CD4-positive, alpha-beta T cell (primary cell): ENCODE measurements at regions of chr17 and their contacts with region 1.

Region 1: DNA sequence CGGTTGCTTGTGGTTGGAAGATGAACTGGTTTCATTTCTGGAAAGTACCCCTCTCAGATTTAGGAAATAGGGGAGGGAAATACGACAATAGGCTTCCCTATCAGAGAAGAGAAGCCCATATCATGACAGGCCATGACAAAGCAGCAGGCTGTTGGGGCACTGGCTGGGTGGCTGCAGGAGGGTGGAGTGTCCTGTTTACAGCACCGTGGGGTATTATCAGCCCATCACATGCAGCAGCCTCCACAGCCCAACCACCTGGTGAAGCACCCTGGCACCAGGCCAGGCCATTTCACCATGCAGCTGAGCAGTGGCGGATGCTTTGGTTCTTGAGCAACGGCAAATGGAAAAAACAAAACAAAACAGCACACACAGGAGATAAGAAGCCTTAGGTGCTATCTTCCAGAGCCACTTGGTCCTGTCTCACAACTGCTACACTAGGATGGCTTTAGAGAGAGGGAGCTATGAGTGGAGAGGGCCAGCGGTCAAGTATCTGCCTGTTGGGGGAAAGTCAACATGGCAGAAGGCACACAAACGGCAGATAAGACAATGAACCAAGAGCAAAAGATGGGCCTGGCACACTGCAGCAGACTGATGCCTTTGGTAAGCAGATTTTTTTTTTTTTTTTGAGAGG is 24.2 kb downstream of the FAM117A start:
- DNase-seq: peak; percentile 91 to 99 (median 98)
- ATAC-seq: peak; percentile 95
- H3K4me3 ChIP-seq: peak overlapping the region; percentile 54
- H3K4me3 Mint-ChIP-seq: peak overlapping the region; percentile 94
- H3K27ac ChIP-seq: peak overlapping the region; percentile 88 to 94
- H3K27ac Mint-ChIP-seq: peak overlapping the region; percentile 99
- H3K4me1 ChIP-seq: peaks cover 89% of the 10 kb centered on the region
- H3K4me1 Mint-ChIP-seq: peaks cover 80% of the 10 kb centered on the region
- H3K27me3 ChIP-seq: no peaks in the 10 kb centered on the region
- H3K27me3 Mint-ChIP-seq: no peaks in the 10 kb centered on the region
- CTCF ChIP-seq: no peak

Region 2: GRCh38 chr17:49670641-49671040 is 69.1 kb before region 1 on chr17:
- CTCF ChIA-PET with region 1: no interaction called
- POLR2A ChIA-PET with region 1: no interaction called
- intact Hi-C with region 1: no loop called
- DNase-seq: no peak
- ATAC-seq: no peak
- H3K4me3 ChIP-seq: no peak overlapping the region
- H3K4me3 Mint-ChIP-seq: peak overlapping the region; percentile 34
- H3K27ac ChIP-seq: no peak overlapping the region
- H3K27ac Mint-ChIP-seq: peak overlapping the region; percentile 78
- H3K4me1 ChIP-seq: peaks cover 24% of the 10 kb centered on the region
- H3K4me1 Mint-ChIP-seq: peaks cover 70% of the 10 kb centered on the region
- H3K27me3 ChIP-seq: no peaks in the 10 kb centered on the region
- H3K27me3 Mint-ChIP-seq: no peaks in the 10 kb centered on the region
- CTCF ChIP-seq: no peak

Region 3: DNA sequence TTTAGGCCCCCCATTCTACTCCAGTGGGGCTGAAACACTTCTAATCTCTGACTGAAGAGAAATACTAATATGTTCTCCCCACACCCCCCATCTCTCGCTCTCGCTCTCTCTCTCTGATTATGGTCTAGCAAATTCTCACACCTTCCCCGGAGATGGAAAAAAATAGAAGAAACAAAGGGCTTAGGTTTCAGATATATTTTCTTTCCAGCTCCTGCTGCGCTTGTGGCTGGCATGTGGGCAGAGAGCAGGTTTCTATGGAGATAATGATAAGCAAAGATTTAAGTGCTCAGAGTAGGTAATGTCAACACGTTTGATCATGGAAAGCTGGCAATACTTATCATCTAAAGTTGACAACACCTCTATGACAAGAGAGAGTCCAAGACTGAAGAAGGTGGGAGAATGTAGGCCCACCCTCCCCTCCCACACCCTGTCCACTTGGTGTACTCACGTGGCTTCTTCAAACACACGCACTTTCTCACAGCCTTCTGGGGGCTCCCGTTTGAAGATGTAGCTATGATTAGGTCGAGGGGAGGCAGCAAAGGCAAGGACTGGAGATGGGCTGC is 24.0 kb before region 1 on chr17:
- CTCF ChIA-PET with region 1: interaction called, 4 read pairs
- POLR2A ChIA-PET with region 1: interaction called, 17 read pairs
- intact Hi-C with region 1: loop called in 1 of 2 experiments (anchors 2 kb)
- DNase-seq: peak in 7 of 14 experiments; percentile 20 to 85 (median 39)
- ATAC-seq: peak; percentile 72
- H3K4me3 ChIP-seq: no peak overlapping the region
- H3K4me3 Mint-ChIP-seq: peak overlapping the region; percentile 58
- H3K27ac ChIP-seq: peak overlapping the region; percentile 62 to 86
- H3K27ac Mint-ChIP-seq: peak overlapping the region; percentile 80
- H3K4me1 ChIP-seq: peaks cover 49% of the 10 kb centered on the region
- H3K4me1 Mint-ChIP-seq: peaks cover 34% of the 10 kb centered on the region
- H3K27me3 ChIP-seq: no peaks in the 10 kb centered on the region
- H3K27me3 Mint-ChIP-seq: no peaks in the 10 kb centered on the region
- CTCF ChIP-seq: no peak

Region 4: DNA sequence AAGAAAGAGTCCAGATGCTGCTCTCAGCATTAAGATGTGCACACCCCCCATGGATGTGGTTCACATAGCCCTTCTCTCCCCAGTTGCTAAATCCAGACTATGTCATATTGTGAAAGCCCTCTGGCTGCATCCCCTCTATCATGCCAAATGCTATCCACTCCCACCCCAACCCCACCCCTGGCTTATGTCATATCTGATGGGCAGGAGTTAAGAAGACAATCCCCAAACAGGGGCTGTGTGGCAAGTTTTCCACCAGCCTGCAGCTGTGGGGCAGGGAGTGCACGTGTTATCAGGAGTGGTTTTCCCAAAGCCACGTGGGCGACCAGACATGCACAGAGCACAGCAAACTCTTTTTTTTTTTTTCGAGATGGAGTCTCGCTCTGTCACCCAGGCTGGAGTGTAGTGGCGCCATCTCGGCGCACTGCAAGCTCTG is 14.2 kb after region 1 on chr17:
- CTCF ChIA-PET with region 1: interaction called, 7 read pairs
- POLR2A ChIA-PET with region 1: interaction called, 253 read pairs
- intact Hi-C with region 1: loop called in 1 of 2 experiments (anchors 1 kb)
- DNase-seq: no peak
- ATAC-seq: no peak
- H3K4me3 ChIP-seq: no peak overlapping the region
- H3K4me3 Mint-ChIP-seq: no peak overlapping the region
- H3K27ac ChIP-seq: peak overlapping the region in 1 of 2 donors; percentile 2
- H3K27ac Mint-ChIP-seq: peak overlapping the region; percentile 72
- H3K4me1 ChIP-seq: peaks cover 88% of the 10 kb centered on the region
- H3K4me1 Mint-ChIP-seq: peaks cover 81% of the 10 kb centered on the region
- H3K27me3 ChIP-seq: no peaks in the 10 kb centered on the region
- H3K27me3 Mint-ChIP-seq: no peaks in the 10 kb centered on the region
- CTCF ChIP-seq: no peak

Region 5: DNA sequence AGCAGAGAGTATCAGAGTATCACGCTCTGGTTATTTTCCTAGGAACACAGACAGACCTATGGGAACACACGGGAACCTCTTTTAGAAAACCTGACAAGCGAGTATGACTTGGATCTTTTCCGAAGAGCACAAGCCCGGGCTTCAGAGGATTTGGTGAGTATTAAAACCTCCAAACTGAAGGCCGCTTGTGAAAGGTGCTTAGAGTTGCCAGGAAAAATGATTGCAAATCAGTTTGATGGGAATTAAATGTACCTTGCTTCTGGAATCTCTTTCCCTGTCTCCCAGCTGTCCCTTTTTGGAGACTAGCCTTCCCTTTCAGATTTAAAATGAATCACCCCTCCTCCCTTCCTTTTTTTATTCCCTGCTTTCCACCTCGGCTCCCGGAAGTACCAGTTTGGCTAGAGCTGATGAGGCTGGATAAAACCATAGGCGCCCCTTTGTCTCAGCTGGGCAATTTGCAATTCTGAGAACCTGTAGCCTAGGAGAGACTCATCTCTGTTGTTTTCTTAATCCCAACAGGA is 76.1 kb after region 1 on chr17:
- CTCF ChIA-PET with region 1: no interaction called
- POLR2A ChIA-PET with region 1: interaction called, 14 read pairs
- intact Hi-C with region 1: loop called in 1 of 2 experiments (anchors 10 kb)
- DNase-seq: no peak
- ATAC-seq: no peak
- H3K4me3 ChIP-seq: no peak overlapping the region
- H3K4me3 Mint-ChIP-seq: no peak overlapping the region
- H3K27ac ChIP-seq: peak overlapping the region in 1 of 2 donors; percentile 43
- H3K27ac Mint-ChIP-seq: peak overlapping the region; percentile 96
- H3K4me1 ChIP-seq: peaks cover 51% of the 10 kb centered on the region
- H3K4me1 Mint-ChIP-seq: peaks cover 73% of the 10 kb centered on the region
- H3K27me3 ChIP-seq: no peaks in the 10 kb centered on the region
- H3K27me3 Mint-ChIP-seq: no peaks in the 10 kb centered on the region
- CTCF ChIP-seq: no peak